Activated CD4-positive, alpha-beta memory T cell treated with anti-CD3 and anti-CD28 coated beads for 36 hours (primary cell): ENCODE measurements at regions of chr7 and their contacts with region 1.

Region 1: DNA sequence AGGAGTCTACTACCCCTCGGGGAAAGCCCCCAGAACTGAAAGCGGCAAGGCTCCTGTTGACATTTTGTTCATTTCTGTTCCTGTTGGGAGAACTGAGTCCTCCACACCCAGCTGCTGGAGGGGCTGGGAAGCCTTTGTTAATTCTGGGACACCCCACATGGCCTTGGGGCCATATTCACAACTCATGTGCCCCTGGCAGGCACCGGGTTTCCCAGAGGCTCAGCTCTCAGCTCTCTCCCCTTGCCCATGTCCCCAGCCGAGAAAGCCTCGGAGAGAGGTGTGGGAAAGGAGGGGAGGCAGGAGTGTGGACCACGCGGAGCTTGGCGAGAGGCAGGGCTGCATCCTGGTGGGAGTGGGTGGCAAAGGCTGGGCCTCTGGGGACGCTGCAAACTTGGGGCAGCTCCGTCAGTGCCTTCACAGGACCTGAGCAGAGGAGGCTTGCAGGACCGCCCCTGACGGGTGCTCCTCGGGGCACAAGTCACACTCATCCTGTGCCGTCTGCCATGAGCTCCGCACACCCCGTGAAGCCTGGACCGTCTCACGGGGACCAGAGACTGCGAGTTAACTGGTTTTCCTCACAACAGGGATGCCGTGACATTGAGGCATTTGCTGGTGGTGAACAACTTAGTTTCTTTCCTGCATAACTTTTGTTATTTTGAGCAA is 140.9 kb downstream of the DNAJB6 start:
- DNase-seq: peak; percentile 53
- H3K4me3 Mint-ChIP-seq: peak overlapping the region; percentile 52
- H3K27ac Mint-ChIP-seq: peak overlapping the region; percentile 58
- H3K4me1 Mint-ChIP-seq: peaks cover 24% of the 10 kb centered on the region
- H3K27me3 Mint-ChIP-seq: no peaks in the 10 kb centered on the region

Region 2: GRCh38 chr7:157250605-157251228 is 227.0 kb before region 1 on chr7:
- CTCF ChIA-PET with region 1: no interaction called
- POLR2A ChIA-PET with region 1: no interaction called
- intact Hi-C with region 1: no loop called
- DNase-seq: peak; percentile 57
- H3K4me3 Mint-ChIP-seq: no peak overlapping the region
- H3K27ac Mint-ChIP-seq: no peak overlapping the region
- H3K4me1 Mint-ChIP-seq: no peaks in the 10 kb centered on the region
- H3K27me3 Mint-ChIP-seq: no peaks in the 10 kb centered on the region

Region 3: DNA sequence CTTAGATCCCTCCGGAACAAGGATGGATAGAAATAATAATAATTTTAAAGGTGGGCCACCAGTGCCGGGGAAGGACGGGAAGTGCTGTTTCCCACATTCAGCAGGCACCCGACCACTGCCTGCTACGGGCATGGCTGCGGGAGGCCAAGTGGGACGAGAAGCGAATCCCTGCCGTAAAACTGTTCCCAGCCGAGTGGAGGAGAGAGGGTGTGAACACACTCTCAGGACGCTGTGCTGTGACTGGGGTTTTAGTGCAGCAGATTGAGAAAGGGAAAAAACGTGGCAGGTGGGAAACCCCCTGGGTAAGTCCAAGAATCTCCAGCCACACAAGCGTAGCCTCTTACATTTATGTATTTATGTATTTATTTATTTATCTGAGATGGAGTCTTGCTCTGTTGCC is 17.9 kb after region 1 on chr7:
- CTCF ChIA-PET with region 1: interaction called, 5 read pairs
- POLR2A ChIA-PET with region 1: no interaction called
- intact Hi-C with region 1: loop called (anchors 2 kb)
- DNase-seq: peak; percentile 54
- H3K4me3 Mint-ChIP-seq: no peak overlapping the region
- H3K27ac Mint-ChIP-seq: peak overlapping the region; percentile 18
- H3K4me1 Mint-ChIP-seq: peaks cover 38% of the 10 kb centered on the region
- H3K27me3 Mint-ChIP-seq: peaks cover 20% of the 10 kb centered on the region